Activated CD4-positive, alpha-beta T cell treated with anti-CD3 and anti-CD28 coated beads for 36 hours (primary cell): ENCODE measurements at regions of chr17 and their contacts with region 1.

Region 1: GRCh38 chr17:67993596-67994361 is 2.5 kb downstream of the C17orf58 start:
- DNase-seq: peak; percentile 84
- ATAC-seq: peak; percentile 57
- H3K4me3 Mint-ChIP-seq: peak overlapping the region; percentile 75
- H3K27ac Mint-ChIP-seq: peak overlapping the region; percentile 84
- H3K4me1 Mint-ChIP-seq: peaks cover 26% of the 10 kb centered on the region
- H3K27me3 Mint-ChIP-seq: peaks cover 13% of the 10 kb centered on the region

Region 2: DNA sequence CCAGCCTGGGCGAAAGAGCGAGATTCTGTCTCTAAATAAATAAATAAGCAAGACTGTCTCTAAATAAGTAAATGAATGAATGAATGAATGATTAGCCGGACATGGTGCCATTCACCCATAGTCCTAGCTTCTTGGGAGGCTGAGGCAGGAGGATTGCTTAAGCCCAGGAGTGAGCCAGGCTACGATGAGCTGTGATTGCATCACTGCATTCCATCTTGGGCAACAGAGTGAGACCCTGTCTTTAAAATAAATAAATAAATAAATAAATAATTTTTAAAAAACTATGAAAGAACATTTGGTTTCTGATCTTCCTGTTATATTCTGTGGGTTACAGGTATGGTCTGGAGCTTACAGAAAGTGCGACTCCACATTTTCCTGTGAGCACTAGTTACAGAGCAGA is 62.5 kb before region 1 on chr17:
- CTCF ChIA-PET with region 1: no interaction called
- POLR2A ChIA-PET with region 1: no interaction called
- intact Hi-C with region 1: no loop called
- DNase-seq: no peak
- ATAC-seq: no peak
- H3K4me3 Mint-ChIP-seq: no peak overlapping the region
- H3K27ac Mint-ChIP-seq: no peak overlapping the region
- H3K4me1 Mint-ChIP-seq: no peaks in the 10 kb centered on the region
- H3K27me3 Mint-ChIP-seq: no peaks in the 10 kb centered on the region

Region 3: GRCh38 chr17:67959288-67959900 is 34.4 kb before region 1 on chr17:
- CTCF ChIA-PET with region 1: interaction called, 6 read pairs
- POLR2A ChIA-PET with region 1: interaction called, 3 read pairs
- intact Hi-C with region 1: loop called in 1 of 2 experiments (anchors 2 kb)
- DNase-seq: no peak
- ATAC-seq: no peak
- H3K4me3 Mint-ChIP-seq: no peak overlapping the region
- H3K27ac Mint-ChIP-seq: peak overlapping the region; percentile 66
- H3K4me1 Mint-ChIP-seq: peaks cover 16% of the 10 kb centered on the region
- H3K27me3 Mint-ChIP-seq: no peaks in the 10 kb centered on the region

Region 4: GRCh38 chr17:68011199-68011665 is 17.5 kb after region 1 on chr17:
- CTCF ChIA-PET with region 1: interaction called, 12 read pairs
- POLR2A ChIA-PET with region 1: interaction called, 11 read pairs
- intact Hi-C with region 1: loop called (anchors 1 to 2 kb)
- DNase-seq: peak; percentile 86
- ATAC-seq: peak; percentile 90
- H3K4me3 Mint-ChIP-seq: peak overlapping the region; percentile 64
- H3K27ac Mint-ChIP-seq: peak overlapping the region; percentile 67
- H3K4me1 Mint-ChIP-seq: peaks cover 5% of the 10 kb centered on the region
- H3K27me3 Mint-ChIP-seq: no peaks in the 10 kb centered on the region

Region 5: GRCh38 chr17:68019675-68020408 is 26.1 kb after region 1 on chr17:
- CTCF ChIA-PET with region 1: interaction called, 9 read pairs
- POLR2A ChIA-PET with region 1: no interaction called
- intact Hi-C with region 1: loop called (anchors 1 to 2 kb)
- DNase-seq: peak; percentile 98
- ATAC-seq: peak; percentile 93
- H3K4me3 Mint-ChIP-seq: peak overlapping the region; percentile 78
- H3K27ac Mint-ChIP-seq: peak overlapping the region; percentile 93
- H3K4me1 Mint-ChIP-seq: peaks cover 8% of the 10 kb centered on the region
- H3K27me3 Mint-ChIP-seq: no peaks in the 10 kb centered on the region

Region 6: DNA sequence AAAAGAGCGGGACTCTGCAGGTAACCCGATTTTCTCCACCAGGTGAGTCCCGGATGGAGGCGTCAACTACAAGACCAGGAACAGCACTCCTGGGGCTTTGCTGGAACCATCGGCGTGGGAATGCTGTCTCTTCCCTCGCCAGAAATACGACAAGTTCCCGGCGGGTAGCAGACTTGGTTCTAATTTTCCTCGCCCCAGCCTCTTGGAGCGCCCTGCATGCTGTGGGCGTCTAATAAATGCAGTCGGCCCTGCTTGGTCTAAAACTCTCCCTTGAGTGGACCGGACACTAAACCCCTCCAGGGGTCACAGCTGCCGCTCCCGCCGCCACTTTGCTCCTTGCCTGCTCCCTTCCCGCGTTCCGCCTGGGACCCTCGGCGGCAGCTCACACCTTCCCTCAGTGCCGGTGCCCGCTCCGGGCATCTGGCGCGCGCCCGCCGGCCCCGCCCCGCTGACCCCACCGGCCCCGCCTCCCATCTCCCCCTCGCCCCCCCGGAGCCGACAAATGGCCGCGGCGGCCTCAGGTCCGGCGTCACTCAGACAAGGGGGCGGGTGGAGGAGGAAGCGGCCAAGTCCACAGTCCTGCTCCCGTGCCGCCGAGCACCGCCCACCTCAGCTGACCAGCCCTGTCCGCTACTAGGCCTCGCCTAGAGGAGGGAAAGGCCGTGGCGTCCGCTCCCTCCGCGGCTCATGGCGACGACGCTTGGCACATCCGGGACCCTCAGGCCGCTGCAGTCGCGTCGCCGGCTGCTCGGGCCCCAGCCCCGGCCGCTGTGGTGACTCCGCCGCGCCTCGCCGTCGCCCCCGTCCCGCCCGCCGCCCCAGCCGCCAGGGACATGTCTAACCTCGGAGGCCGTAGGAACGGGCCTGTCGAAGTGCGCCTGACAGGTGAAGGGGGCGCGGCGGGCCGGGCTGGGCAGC is 107.6 kb after region 1 on chr17:
- CTCF ChIA-PET with region 1: no interaction called
- POLR2A ChIA-PET with region 1: no interaction called
- intact Hi-C with region 1: loop called in 1 of 2 experiments (anchors 1 kb)
- DNase-seq: peak; percentile 71
- ATAC-seq: peak; percentile 63
- H3K4me3 Mint-ChIP-seq: peak overlapping the region; percentile 87
- H3K27ac Mint-ChIP-seq: peak overlapping the region; percentile 91
- H3K4me1 Mint-ChIP-seq: peaks cover 31% of the 10 kb centered on the region
- H3K27me3 Mint-ChIP-seq: no peaks in the 10 kb centered on the region